B cell (primary cell): ENCODE measurements at regions of chr3 and their contacts with region 1.

Region 1: DNA sequence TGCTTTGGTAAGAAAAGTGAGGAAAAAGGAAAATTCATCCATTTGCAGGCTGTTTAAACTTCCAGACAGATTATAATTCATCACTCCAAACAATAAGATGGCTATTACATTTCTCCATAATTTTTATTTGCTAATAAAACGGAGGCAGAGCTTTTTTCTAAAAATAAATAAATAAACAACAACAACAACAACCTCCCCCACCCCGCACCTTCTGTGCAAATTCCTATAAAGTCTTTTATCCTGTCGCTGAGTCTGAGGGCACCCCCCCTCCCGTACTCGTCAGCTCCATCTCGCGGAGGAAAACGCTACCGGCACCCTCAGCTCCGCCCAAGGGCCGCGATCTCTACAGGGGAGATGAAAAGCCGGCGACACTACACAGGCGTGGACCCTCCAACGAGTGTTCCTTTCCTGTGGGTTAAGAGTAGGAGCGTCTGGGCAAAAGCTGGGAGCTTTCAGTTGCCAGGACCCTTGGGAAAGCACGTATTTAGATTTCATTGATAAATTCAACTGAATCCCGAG is 1.0 kb upstream of the ATP1B3 start:
- DNase-seq: peak; percentile 87
- ATAC-seq: peak; percentile 63
- H3K4me3 ChIP-seq: peak overlapping the region; percentile 74 to 89 (median 79)
- H3K4me3 Mint-ChIP-seq: peak overlapping the region; percentile 90
- H3K27ac ChIP-seq: peak overlapping the region; percentile 90 to 98
- H3K27ac Mint-ChIP-seq: peak overlapping the region; percentile 90
- H3K4me1 ChIP-seq: peaks cover 8 to 15% of the 10 kb centered on the region in 2 donors
- H3K4me1 Mint-ChIP-seq: peaks cover 28% of the 10 kb centered on the region
- H3K27me3 ChIP-seq: no peaks in the 10 kb centered on the region
- H3K27me3 Mint-ChIP-seq: no peaks in the 10 kb centered on the region
- CTCF ChIP-seq: peak; percentile 90

Region 2: DNA sequence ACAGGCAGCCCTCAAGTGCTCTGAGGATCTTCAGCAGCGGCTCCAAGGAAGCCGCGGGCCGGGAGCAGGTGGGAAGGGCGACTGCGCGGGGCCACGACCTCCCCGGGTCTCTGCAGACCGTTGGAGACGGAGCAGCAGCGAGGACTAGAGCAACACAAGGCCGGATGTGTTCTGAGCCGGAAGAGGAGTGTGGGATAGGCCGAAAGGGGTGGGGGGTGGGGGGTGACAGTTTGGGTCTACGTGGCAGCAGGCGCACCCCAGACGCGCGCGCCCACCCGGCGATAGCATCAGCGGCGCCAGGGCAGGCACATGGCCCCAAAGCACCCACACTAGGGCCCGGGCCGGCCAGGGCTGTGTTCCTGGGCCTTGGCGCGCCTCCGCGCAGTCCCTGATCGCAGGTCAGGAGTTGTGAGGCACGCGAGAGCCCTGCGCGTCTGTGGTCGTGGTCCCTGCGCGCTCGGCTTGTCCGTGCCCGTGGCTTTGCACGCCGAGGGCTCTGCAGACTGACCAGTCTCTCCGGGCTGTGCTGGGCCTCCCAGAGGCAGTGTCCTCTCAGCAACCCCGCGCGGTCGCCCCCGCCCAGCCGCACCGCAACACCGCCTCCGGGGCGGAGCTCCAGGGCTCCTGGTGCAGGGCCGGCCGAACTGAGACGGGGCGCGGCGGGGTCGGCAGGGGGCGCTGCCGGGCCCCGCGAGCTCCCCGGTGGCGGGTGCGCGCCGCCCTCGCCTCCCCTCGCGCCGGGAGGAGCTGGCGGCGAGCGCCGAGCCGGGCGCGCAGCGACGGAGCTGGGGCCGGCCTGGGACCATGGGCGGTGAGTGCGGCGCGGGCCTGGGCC is 644.1 kb before region 1 on chr3 and contains the start of gene PXYLP1:
- CTCF ChIA-PET with region 1: no interaction called
- POLR2A ChIA-PET with region 1: interaction called, 5 read pairs
- intact Hi-C with region 1: loop called (anchors 2 kb)
- DNase-seq: peak; percentile 90
- ATAC-seq: peak; percentile 96
- H3K4me3 ChIP-seq: peak within 1 kb of the TSS; percentile 61 to 94 (median 71)
- H3K4me3 Mint-ChIP-seq: peak within 1 kb of the TSS; percentile 95
- H3K27ac ChIP-seq: peak within 1 kb of the TSS; percentile 67 to 80
- H3K27ac Mint-ChIP-seq: peak within 1 kb of the TSS; percentile 97
- H3K4me1 ChIP-seq: peaks cover 9 to 16% of the 10 kb centered on the region in 2 donors
- H3K4me1 Mint-ChIP-seq: peaks cover 18% of the 10 kb centered on the region
- H3K27me3 ChIP-seq: peaks cover 0 to 4% (median 0%) of the 10 kb centered on the region in 4 experiments
- H3K27me3 Mint-ChIP-seq: no peaks in the 10 kb centered on the region
- CTCF ChIP-seq: peak; percentile 69
- total RNA-seq, gene PXYLP1: 4.5 and 5.4 TPM in 2 replicates

Region 3: DNA sequence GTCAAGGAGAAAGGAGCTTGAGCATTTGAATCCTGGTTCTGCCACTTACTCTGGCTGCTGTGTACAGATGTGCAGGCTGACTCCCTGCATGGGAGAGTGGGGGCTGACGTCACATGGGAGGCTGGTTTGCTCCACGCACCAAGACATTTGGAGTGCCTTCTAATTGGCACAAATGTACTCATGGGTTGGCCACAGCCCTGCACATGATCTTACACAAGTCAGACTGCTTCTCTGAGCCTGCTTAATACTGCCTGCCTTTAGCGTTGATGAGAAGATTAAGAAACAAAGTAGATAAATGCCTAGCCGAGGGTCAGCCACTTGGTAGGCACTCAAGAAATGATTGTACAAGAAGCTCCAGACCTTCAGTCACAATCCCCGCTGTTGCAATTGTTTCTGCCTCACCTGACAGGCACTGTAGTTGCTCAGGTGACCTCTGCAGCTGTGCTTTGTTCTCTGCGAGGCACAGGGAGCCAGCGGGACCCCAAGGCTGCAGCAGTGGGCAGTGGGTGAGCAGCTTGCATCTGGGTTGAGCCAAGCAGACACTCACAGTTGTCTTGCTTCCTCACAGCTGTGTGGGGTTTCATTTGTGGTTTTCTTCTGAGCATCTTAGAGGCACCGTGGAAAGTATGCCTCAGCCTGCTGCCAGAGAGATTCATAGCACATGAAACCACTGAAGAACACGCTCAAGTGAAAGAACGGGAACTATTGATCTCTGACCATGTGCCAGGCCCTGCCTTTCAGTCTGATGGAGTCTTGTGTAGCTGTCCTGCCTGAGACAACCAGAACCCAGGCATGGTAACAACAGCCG is 79.1 kb before region 1 on chr3:
- CTCF ChIA-PET with region 1: interaction called, 6 read pairs
- POLR2A ChIA-PET with region 1: interaction called, 9 read pairs
- intact Hi-C with region 1: loop called (anchors 1 kb)
- DNase-seq: peak; percentile 68
- ATAC-seq: peak; percentile 88
- H3K4me3 ChIP-seq: peak overlapping the region in 3 of 5 experiments; percentile 53 to 62 (median 61)
- H3K4me3 Mint-ChIP-seq: peak overlapping the region; percentile 85
- H3K27ac ChIP-seq: peak overlapping the region; percentile 19 to 50
- H3K27ac Mint-ChIP-seq: peak overlapping the region; percentile 93
- H3K4me1 ChIP-seq: peaks cover 21 to 26% of the 10 kb centered on the region in 2 donors
- H3K4me1 Mint-ChIP-seq: peaks cover 34% of the 10 kb centered on the region
- H3K27me3 ChIP-seq: no peaks in the 10 kb centered on the region
- H3K27me3 Mint-ChIP-seq: no peaks in the 10 kb centered on the region
- CTCF ChIP-seq: no peak

Region 4: GRCh38 chr3:142028243-142028777 is 152.9 kb after region 1 on chr3:
- CTCF ChIA-PET with region 1: no interaction called
- POLR2A ChIA-PET with region 1: no interaction called
- intact Hi-C with region 1: loop called (anchors 5 kb)
- DNase-seq: peak; percentile 73
- ATAC-seq: peak; percentile 69
- H3K4me3 ChIP-seq: peak overlapping the region; percentile 26 to 72 (median 56)
- H3K4me3 Mint-ChIP-seq: peak overlapping the region; percentile 90
- H3K27ac ChIP-seq: no peak overlapping the region
- H3K27ac Mint-ChIP-seq: peak overlapping the region; percentile 21
- H3K4me1 ChIP-seq: peaks cover 3% of the 10 kb centered on the region in 2 donors
- H3K4me1 Mint-ChIP-seq: peaks cover 24% of the 10 kb centered on the region
- H3K27me3 ChIP-seq: no peaks in the 10 kb centered on the region
- H3K27me3 Mint-ChIP-seq: no peaks in the 10 kb centered on the region
- CTCF ChIP-seq: no peak

Region 5: GRCh38 chr3:142226484-142226883 is 351.1 kb after region 1 on chr3:
- CTCF ChIA-PET with region 1: no interaction called
- POLR2A ChIA-PET with region 1: no interaction called
- intact Hi-C with region 1: loop called (anchors 10 kb)
- DNase-seq: no peak
- ATAC-seq: no peak
- H3K4me3 ChIP-seq: no peak overlapping the region
- H3K4me3 Mint-ChIP-seq: peak overlapping the region; percentile 70
- H3K27ac ChIP-seq: no peak overlapping the region
- H3K27ac Mint-ChIP-seq: peak overlapping the region; percentile 32
- H3K4me1 ChIP-seq: peaks cover 3 to 8% of the 10 kb centered on the region in 2 donors
- H3K4me1 Mint-ChIP-seq: peaks cover 9% of the 10 kb centered on the region
- H3K27me3 ChIP-seq: no peaks in the 10 kb centered on the region
- H3K27me3 Mint-ChIP-seq: no peaks in the 10 kb centered on the region
- CTCF ChIP-seq: no peak